ENCODE measurements at regions of chr14 and their contacts with region 1.

Region 1: DNA sequence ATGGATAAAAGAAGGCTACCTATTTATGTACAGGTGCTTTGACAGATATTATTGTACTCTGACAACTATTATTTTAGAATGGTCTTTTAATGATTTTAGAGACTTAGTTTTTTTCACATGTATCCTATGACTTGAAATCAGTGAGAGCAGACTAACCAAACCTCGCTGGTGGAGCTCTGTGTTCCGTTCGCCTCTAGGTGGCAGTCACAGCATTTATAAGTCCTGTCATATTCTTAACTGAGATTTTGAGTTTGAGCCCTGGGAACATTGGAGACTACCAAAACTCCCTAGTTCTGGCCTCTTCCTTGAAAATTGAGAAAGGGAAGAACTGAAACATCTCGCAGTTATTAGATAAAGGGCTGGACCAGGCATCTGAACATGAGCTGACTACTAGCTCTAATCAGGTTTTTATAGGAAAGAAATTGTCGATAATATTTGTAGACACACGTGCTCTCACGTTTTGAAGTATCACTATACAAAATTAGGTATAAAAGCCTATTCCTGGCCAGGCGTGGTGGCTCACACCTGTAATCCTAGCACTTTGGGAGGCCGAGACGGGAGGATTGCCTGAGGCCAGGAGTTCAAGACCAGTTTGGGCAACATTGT is 48.3 kb downstream of the TTLL5 start:
- DNase-seq: peak; percentile 66
- CTCF ChIP-seq: peak; percentile 82

Region 2: DNA sequence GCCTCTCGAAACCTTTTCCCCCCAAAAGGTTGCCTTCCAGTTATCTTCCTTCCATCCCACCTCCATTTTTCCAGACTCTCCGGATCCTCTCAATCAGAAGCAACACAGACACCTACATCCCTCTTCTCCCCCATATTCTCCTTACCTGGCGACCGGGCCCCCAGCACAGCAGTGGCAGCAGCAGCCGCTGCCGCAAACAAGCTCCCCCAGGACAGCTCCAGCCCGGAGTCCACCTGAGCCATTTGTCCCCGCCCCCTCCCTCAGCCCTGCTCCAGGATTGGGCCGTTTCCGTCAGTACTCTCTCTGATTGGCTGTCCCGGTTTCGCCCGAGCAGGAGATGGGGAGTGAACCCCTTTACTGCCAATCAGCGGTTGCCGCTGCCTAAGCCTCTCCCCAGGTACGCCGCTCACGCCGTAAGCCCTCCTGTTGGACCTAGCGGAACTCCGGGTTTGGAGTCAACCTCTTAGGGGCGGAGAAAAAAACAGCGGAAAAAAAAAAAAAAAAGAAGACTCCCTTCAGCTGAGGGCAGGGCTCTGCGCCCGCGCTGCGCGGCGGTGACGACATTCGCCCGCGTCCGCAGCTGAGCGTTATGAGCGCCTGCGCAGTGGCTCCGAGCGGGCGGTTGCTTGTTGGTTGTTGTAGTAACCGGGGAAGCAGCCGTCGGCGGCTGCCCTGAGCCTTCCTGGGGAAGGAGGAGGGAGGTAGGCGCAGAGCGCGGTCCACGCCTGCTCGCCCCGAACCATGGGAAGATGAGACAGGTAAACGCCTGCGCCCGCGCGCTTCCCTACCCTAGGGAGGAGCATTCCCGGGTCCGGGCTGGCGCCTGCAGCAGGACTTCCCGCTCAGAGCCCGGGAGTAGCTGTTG is 48.4 kb before region 1 on chr14 and contains the starts of genes ERG28 and TTLL5:
- CTCF ChIA-PET with region 1: interaction called, 12 read pairs
- POLR2A ChIA-PET with region 1: no interaction called
- DNase-seq: peak; percentile 98
- CTCF ChIP-seq: no peak

Region 3: GRCh38 chr14:75720842-75721498 is 11.7 kb after region 1 on chr14:
- CTCF ChIA-PET with region 1: interaction called, 24 read pairs
- POLR2A ChIA-PET with region 1: no interaction called
- DNase-seq: no peak
- CTCF ChIP-seq: no peak

Region 4: GRCh38 chr14:75794615-75795038 is 85.3 kb after region 1 on chr14:
- CTCF ChIA-PET with region 1: interaction called, 28 read pairs
- POLR2A ChIA-PET with region 1: no interaction called
- DNase-seq: no peak
- CTCF ChIP-seq: no peak

Region 5: GRCh38 chr14:75879031-75879430 is 169.7 kb after region 1 on chr14:
- CTCF ChIA-PET with region 1: interaction called, 17 read pairs
- POLR2A ChIA-PET with region 1: no interaction called
- DNase-seq: peak; percentile 18
- CTCF ChIP-seq: no peak

Region 6: GRCh38 chr14:75976826-75977581 is 267.7 kb after region 1 on chr14:
- CTCF ChIA-PET with region 1: interaction called, 216 read pairs
- POLR2A ChIA-PET with region 1: no interaction called
- DNase-seq: no peak
- CTCF ChIP-seq: no peak

Region 7: DNA sequence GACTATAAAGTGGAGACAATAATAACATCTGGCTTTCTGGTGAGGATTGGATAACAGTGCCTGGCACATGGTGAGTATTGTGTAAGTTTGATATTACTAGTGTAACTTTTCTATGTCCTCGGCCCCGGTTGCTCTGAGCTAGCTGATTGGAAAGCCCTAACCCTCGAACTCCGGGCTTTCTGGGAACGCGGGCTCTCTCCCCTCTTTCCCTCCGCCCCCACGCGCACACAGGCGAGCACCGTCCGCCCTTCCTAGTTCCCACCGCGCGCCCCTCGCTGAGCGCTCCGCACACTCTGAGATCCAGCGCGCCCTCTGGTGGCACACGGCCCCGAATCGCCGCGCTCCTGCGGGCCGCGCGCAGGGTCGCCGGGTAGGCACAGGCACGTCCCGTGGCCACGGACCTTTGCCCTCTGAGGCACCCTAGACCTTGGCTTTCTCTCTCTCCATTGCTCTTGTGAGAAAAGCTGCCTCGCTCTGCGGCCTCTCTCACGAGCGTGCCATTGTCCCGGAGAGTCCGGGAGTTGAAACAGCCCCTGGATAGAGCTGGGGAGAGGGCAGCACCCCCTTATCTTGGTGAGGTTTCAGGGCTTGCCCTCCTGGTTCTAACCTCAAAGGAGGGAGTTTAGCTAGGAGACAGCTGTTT is 643.5 kb after region 1 on chr14:
- CTCF ChIA-PET with region 1: interaction called, 19 read pairs
- POLR2A ChIA-PET with region 1: no interaction called
- DNase-seq: peak; percentile 82
- CTCF ChIP-seq: peak; percentile 92

Region 8: GRCh38 chr14:76396714-76397187 is 687.4 kb after region 1 on chr14:
- CTCF ChIA-PET with region 1: no interaction called
- POLR2A ChIA-PET with region 1: no interaction called
- DNase-seq: no peak
- CTCF ChIP-seq: no peak